Heart left ventricle (tissue), 16 donors: ENCODE measurements at regions of chr6 and their contacts with region 1.

Region 1: DNA sequence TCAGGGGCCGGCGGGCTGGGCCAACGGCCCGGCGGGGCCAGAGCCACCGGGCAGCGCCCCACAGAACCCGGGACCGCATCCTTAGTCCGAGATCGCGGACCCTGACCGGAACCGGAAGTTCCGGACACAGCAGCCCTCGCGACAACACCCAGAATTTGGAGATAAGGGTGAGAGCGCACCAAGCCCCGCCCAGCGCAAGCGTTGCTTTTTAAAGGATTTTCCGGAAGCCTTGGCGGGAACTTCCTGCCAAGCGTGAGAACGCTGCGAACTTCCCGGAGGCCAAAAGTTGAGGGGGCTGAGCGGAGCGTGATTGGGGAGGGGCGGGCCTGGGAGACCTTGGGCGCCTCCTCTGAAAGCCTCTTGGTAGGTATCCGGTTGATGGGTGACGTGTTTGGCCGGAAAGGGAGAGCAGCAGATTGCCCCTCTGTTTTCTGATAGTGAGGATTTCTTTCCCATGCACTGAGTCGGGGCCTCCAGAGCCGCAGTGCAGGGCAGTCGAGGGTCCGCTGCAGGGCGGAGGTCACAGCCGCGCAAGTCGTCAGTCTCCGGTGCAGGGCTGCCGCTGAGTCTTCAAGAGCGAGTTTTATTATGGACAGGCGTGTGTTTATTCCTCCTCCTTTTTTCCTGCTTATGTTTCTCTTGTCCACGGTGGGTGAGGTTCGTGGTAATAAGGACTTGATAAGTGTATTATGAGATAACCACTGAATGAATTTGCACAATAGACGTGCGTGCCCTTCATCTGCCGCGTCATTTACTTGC is at the start of gene MTRF1L:
- DNase-seq: peak; percentile 94 to 97 (median 95)
- ATAC-seq: peak; percentile 97 to 99 (median 98)
- H3K4me3 ChIP-seq: peak within 1 kb of the TSS; percentile 60 to 89 (median 78)
- H3K27ac ChIP-seq: peak within 1 kb of the TSS; percentile 75 to 96 (median 90)
- H3K4me1 ChIP-seq: peaks cover 4 to 58% (median 31%) of the 10 kb centered on the region in 12 donors
- H3K27me3 ChIP-seq: no peaks in the 10 kb centered on the region
- CTCF ChIP-seq: peak in 2 of 12 donors; percentile 18 to 25
- POLR2A ChIP-seq: peak; percentile 26 to 82
- total RNA-seq, gene MTRF1L: 17.0 to 33.0 (median 22.7) TPM

Region 2: DNA sequence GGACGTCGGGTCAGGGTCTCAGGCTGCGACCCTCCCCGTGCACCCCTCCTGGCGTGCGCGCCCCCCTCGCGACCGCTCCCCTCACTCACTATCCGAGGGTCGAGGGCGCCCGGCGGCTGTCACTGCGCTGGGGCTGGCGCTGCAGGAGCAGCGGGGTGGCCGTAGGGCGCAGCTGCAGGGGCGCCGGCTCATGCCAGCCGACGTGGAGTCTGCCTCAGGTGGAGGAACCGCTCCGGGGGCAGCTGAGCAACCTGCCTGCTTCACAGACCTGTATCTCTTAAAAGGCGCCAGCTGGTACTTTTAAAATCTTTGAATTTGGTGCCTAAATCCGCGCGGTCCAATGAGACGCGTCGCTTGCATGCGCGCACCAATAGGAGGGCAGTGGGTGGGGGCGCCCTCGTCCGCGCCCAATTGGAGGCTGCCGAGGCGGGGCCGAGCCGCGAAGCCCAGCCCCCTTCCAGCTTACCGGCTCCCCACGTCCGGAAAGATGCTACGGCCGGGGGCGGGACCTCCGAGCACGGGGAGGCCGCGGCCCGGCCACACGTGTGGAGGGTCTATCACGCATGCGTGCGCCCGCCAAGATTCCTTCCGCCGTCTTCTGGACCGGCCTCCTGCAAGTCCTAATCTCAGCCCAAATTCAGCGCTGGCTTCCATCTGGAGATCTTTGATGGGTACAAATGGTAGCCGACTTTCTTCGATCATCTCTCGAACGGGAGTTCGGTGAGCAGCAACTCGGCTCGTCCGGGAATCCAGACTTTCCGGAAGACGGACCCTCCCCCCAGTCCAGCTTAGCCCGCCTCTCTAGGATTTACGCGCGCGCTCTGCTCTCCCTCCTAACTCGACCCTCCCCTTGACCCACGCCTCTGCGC is 19.8 kb before region 1 on chr6 and contains the start of gene FBXO5:
- intact Hi-C with region 1: loop called in 4 of 10 experiments (anchors 1 to 2 kb)
- DNase-seq: peak; percentile 97 to 99 (median 98)
- ATAC-seq: peak; percentile 97 to 98 (median 98)
- H3K4me3 ChIP-seq: peak within 1 kb of the TSS; percentile 51 to 92 (median 70)
- H3K27ac ChIP-seq: peak within 1 kb of the TSS; percentile 66 to 99 (median 94)
- H3K4me1 ChIP-seq: peaks cover 4 to 46% (median 21%) of the 10 kb centered on the region in 12 donors
- H3K27me3 ChIP-seq: no peaks in the 10 kb centered on the region
- CTCF ChIP-seq: no peak
- POLR2A ChIP-seq: peak in 1 of 2 donors; percentile 57
- total RNA-seq, gene FBXO5: 1.1 to 5.1 (median 2.1) TPM

Region 3: GRCh38 chr6:153013438-153013837 is 10.7 kb after region 1 on chr6:
- intact Hi-C with region 1: no loop called
- DNase-seq: no peak
- ATAC-seq: no peak
- H3K4me3 ChIP-seq: no peak overlapping the region
- H3K27ac ChIP-seq: no peak overlapping the region
- H3K4me1 ChIP-seq: no peaks in the 10 kb centered on the region
- H3K27me3 ChIP-seq: no peaks in the 10 kb centered on the region
- CTCF ChIP-seq: no peak
- POLR2A ChIP-seq: no peak